WTC11 (cell line): ENCODE measurements at regions of chr15 and their contacts with region 1.

Region 1: GRCh38 chr15:57527382-57528091 is 64.2 kb upstream of the MYZAP start:
- DNase-seq: no peak
- ATAC-seq: peak; percentile 92
- H3K4me3 Mint-ChIP-seq: no peak overlapping the region
- H3K27ac Mint-ChIP-seq: no peak overlapping the region
- H3K4me1 Mint-ChIP-seq: peaks cover 11% of the 10 kb centered on the region
- H3K27me3 Mint-ChIP-seq: no peaks in the 10 kb centered on the region
- CTCF ChIP-seq: no peak; the same call in 1 of the 2 replicates

Region 2: GRCh38 chr15:57356636-57357035 is 170.9 kb before region 1 on chr15:
- CTCF ChIA-PET with region 1: interaction called, 15 read pairs
- POLR2A ChIA-PET with region 1: no interaction called
- DNase-seq: no peak
- ATAC-seq: peak; percentile 92
- H3K4me3 Mint-ChIP-seq: no peak overlapping the region
- H3K27ac Mint-ChIP-seq: peak overlapping the region; percentile 6; the same call in 1 of the 2 replicates
- H3K4me1 Mint-ChIP-seq: peaks cover 52% of the 10 kb centered on the region
- H3K27me3 Mint-ChIP-seq: peaks cover 5% of the 10 kb centered on the region
- CTCF ChIP-seq: no peak

Region 3: DNA sequence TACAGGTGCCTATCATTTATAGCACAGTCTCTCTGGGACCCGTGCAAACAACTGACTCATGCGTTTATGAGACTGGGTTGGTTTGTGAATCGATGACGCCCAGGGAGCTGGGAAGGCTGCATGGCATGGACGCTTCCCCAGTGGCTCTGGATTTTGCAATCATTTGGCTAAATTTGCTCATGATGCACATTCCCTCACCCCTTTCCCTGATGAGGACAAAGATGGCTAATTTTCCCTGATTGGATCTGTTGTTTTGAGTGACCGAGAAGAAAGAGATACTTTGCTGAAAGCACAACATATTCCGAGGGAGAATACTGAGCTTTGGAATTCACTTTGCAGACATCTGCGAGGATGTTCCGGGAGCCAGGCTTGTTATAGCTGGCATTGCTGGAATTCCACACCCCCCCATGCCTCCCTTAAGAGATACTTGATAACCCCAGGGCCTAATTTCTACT is 100.1 kb before region 1 on chr15:
- CTCF ChIA-PET with region 1: interaction called, 14 read pairs
- POLR2A ChIA-PET with region 1: no interaction called
- DNase-seq: peak; percentile 33
- ATAC-seq: peak; percentile 49
- H3K4me3 Mint-ChIP-seq: peak overlapping the region; percentile 20; the same call in 1 of the 2 replicates
- H3K27ac Mint-ChIP-seq: peak overlapping the region; percentile 97
- H3K4me1 Mint-ChIP-seq: peaks cover 87% of the 10 kb centered on the region
- H3K27me3 Mint-ChIP-seq: no peaks in the 10 kb centered on the region
- CTCF ChIP-seq: no peak

Region 4: DNA sequence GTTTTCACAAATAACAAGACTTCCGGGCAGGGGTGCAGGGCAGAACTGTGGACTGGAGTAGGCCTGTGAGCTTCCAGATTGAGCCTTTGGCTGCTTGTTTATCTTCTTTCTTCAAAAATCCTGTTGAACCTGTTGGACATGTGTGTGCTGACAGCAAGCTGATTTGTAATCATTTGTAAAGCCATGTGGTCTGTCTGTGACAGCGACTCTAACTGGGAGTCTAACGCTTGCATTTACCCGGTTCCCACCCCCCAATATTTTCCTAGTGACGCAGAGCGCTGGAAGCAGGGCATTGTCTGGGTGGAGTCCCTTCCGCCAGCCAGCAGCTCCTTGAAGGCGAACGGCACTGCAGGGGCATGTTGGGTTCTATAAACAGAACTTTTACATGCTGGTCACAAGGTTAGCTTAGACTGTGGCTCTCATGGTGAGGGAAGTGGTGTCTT is 21.6 kb before region 1 on chr15:
- CTCF ChIA-PET with region 1: interaction called, 43 read pairs
- POLR2A ChIA-PET with region 1: no interaction called
- DNase-seq: no peak
- ATAC-seq: peak; percentile 11
- H3K4me3 Mint-ChIP-seq: no peak overlapping the region
- H3K27ac Mint-ChIP-seq: peak overlapping the region; percentile 31; the same call in 1 of the 2 replicates
- H3K4me1 Mint-ChIP-seq: peaks cover 52% of the 10 kb centered on the region
- H3K27me3 Mint-ChIP-seq: no peaks in the 10 kb centered on the region
- CTCF ChIP-seq: no peak

Region 5: DNA sequence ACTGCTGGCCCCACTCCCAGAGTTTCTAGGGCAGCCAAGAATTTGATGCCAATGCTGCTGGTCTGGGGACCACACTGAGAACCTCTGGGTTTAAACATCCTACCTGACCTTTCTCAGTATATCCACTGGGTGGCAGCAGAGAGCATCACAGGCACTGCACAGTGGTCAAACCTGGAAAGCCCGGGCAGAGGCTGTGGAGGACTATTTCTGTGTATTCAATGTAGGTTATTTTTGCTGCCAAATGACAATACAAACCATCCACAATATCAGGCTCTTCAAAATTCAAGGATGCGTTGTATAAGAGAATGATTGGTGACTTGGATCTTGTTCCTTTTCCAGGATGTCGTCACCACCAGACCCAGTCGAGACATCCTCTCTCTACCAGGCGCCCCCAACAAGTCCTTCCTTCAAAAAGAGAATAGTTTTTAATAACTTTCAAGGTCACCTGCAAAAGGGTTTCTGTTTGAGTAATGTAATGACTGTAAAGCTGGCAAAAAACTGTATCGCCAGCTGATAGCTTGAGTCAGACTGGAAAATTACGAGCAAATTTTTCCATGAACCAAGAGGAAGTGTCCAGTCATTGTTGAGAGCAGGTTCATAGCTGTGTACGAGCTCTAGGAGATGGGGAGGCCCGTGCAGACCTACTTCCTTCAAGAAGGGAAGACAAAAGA is 33.6 kb after region 1 on chr15:
- CTCF ChIA-PET with region 1: interaction called, 11 read pairs
- POLR2A ChIA-PET with region 1: no interaction called
- DNase-seq: peak; percentile 66
- ATAC-seq: peak; percentile 88
- H3K4me3 Mint-ChIP-seq: no peak overlapping the region
- H3K27ac Mint-ChIP-seq: no peak overlapping the region
- H3K4me1 Mint-ChIP-seq: peaks cover 8% of the 10 kb centered on the region
- H3K27me3 Mint-ChIP-seq: no peaks in the 10 kb centered on the region
- CTCF ChIP-seq: peak; percentile 86

Region 6: DNA sequence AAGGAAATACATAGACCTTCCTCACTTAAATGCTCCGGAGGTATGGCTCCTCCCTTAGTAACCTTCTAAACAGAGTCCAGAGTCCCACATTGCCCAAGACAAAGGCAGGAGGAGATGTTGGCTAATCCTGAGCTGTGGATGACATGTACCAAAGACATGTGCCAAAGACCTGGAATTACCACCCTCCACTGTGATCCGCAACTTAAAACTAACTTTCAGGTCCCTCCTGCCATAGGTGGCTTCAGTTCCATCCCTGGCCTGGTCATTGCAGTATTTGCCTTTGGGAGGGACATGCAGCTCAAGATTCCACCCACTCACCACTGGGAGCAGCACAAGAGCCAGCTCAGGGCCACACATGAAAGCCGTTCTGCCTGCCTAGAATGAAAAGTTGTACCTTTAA is 92.2 kb after region 1 on chr15:
- CTCF ChIA-PET with region 1: no interaction called
- POLR2A ChIA-PET with region 1: no interaction called
- DNase-seq: no peak
- ATAC-seq: peak; percentile 79
- H3K4me3 Mint-ChIP-seq: no peak overlapping the region
- H3K27ac Mint-ChIP-seq: no peak overlapping the region
- H3K4me1 Mint-ChIP-seq: peaks cover 11% of the 10 kb centered on the region
- H3K27me3 Mint-ChIP-seq: no peaks in the 10 kb centered on the region
- CTCF ChIP-seq: no peak